Activated naive CD4-positive, alpha-beta T cell treated with anti-CD3 and anti-CD28 coated beads for 36 hours (primary cell): ENCODE measurements at regions of chr1 and their contacts with region 1.

Region 1: DNA sequence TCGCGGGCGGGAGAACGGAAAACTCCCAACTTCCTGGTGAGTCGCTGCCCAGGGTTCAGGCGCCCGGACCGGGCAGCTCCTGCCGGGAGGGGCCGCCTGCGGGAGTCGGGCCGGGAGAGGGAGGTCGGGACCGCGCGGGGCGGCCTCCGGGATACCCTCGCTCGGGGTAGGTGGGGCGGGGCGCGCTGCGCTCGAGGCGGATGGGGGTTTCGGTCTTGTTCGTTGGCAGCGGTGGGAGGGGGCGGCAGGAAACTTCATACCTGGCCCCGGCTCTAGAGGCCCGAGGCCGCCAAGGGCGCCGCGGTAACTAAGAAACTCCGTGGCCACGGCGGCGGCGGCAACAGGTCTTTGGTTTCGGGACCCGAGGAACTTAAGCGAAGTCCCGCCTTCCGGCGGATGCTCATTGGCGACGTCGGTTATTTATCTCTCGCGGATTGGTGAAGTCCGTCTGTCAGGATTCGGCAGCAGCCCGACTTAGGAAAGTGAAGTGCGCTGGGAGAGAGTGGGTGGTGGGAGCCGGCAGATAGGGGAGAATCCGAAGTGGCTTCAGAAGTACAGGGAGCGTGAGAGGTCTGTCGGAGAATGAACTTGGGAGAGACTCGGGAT is 546 bp downstream of the NEK7 start:
- DNase-seq: peak; percentile 84
- H3K4me3 Mint-ChIP-seq: peak overlapping the region; percentile 100
- H3K27ac Mint-ChIP-seq: peak overlapping the region; percentile 98
- H3K4me1 Mint-ChIP-seq: peaks cover 30% of the 10 kb centered on the region
- H3K27me3 Mint-ChIP-seq: no peaks in the 10 kb centered on the region

Region 2: DNA sequence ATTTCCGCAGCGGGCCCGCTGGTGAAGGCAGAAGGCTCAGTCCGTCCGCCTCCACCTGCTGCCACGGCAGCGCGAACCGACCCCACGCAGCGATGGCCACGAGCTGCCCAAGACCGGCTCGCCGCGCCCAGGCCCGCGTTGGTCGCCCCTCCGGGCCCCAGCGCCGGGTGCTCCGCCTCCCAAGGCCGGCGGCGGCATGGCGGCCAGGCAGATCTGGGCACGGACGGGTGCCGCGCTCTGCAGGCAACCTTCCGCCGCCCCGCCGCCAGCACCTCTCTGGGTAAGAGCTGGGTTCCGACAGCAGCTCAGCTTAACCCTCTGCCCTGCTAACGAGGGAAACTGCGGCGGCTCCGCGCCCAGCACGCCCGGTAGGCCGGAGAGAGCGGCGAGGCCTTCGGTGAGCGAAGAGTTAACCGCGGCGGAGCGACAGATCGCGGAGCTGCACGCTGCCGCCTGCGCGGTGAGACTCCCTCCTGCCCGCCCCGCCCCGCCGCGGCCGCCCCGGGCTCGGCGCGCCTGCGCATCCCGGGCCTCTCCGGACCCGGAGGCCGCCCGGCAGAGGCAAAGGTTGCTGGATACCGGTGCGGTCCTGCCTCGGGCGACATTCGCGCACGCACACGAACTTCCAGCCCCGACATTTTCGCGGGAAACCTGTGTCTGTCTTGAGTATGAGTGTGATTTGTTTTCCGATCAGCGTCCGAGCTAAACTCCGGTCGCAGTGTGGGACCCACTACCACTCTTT is 254.7 kb before region 1 on chr1 and contains the start of gene C1orf53:
- CTCF ChIA-PET with region 1: no interaction called
- intact Hi-C with region 1: loop called (anchors 2 kb)
- DNase-seq: peak; percentile 77
- H3K4me3 Mint-ChIP-seq: peak within 1 kb of the TSS; percentile 84
- H3K27ac Mint-ChIP-seq: peak within 1 kb of the TSS; percentile 55
- H3K4me1 Mint-ChIP-seq: peaks cover 10% of the 10 kb centered on the region
- H3K27me3 Mint-ChIP-seq: peaks cover 45% of the 10 kb centered on the region
- total RNA-seq, gene C1orf53: 0.52 TPM in 1 of 2 experiments, not detected in the other

Region 3: DNA sequence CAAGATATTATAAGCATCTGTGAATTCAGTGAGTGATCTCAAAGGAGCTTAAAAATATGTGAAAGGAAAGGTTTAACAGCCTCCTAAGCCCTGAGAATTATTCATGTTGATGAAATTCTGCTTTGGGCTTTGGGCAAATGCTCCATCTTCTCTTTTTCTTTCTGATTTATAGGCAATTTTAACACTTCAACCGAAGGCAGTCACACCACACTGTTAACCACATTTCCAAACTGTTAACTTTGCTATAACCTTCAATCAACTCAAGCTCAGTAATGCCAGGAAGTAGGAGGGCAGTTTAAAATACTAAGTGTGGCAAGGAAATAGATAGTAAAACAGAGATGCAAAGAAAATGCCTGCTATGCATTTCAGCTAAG is 54.9 kb before region 1 on chr1:
- CTCF ChIA-PET with region 1: no interaction called
- intact Hi-C with region 1: loop called (anchors 5 kb)
- DNase-seq: peak; percentile 4
- H3K4me3 Mint-ChIP-seq: no peak overlapping the region
- H3K27ac Mint-ChIP-seq: peak overlapping the region; percentile 19
- H3K4me1 Mint-ChIP-seq: peaks cover 18% of the 10 kb centered on the region
- H3K27me3 Mint-ChIP-seq: no peaks in the 10 kb centered on the region

Region 4: DNA sequence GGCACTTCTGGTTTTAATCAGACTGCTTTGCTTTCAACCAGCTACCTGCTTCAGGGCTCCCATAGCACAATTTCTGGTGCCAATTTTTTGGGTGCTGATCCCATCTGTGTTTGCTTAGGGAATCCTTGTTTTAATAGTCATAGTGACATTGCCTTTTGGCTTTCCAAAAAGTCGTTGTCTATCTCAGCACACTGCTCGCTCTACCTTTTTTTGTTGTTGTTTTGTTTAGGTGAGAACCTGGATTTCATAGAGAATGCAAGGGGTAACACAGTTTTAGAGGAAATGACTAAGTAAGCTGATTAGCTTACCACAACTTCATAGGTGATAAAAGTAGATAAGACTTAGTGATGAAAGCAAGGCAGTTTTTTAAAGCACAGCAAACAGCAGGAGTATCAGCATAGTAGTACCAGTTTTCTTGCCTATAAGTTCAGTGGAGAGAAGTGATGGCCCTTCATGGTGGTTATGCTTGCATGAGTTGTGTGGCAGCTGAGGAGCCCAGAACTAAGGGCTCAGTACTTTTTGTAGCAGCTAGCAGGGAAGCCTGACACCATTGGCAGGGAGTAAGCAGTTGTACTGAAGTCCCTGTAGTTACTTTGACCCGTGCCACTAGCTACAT is 30.7 kb after region 1 on chr1:
- CTCF ChIA-PET with region 1: interaction called, 3 read pairs
- intact Hi-C with region 1: loop called (anchors 1 kb)
- DNase-seq: no peak
- H3K4me3 Mint-ChIP-seq: peak overlapping the region; percentile 16
- H3K27ac Mint-ChIP-seq: peak overlapping the region; percentile 20
- H3K4me1 Mint-ChIP-seq: peaks cover 72% of the 10 kb centered on the region
- H3K27me3 Mint-ChIP-seq: no peaks in the 10 kb centered on the region

Region 5: GRCh38 chr1:198359024-198359653 is 201.8 kb after region 1 on chr1:
- CTCF ChIA-PET with region 1: interaction called, 6 read pairs
- intact Hi-C with region 1: loop called (anchors 2 kb)
- DNase-seq: no peak
- H3K4me3 Mint-ChIP-seq: no peak overlapping the region
- H3K27ac Mint-ChIP-seq: no peak overlapping the region
- H3K4me1 Mint-ChIP-seq: no peaks in the 10 kb centered on the region
- H3K27me3 Mint-ChIP-seq: no peaks in the 10 kb centered on the region

Region 6: GRCh38 chr1:198880818-198881597 is 723.7 kb after region 1 on chr1:
- CTCF ChIA-PET with region 1: no interaction called
- intact Hi-C with region 1: loop called (anchors 5 kb)
- DNase-seq: peak; percentile 40
- H3K4me3 Mint-ChIP-seq: no peak overlapping the region
- H3K27ac Mint-ChIP-seq: peak overlapping the region; percentile 32
- H3K4me1 Mint-ChIP-seq: peaks cover 33% of the 10 kb centered on the region
- H3K27me3 Mint-ChIP-seq: no peaks in the 10 kb centered on the region